Activated CD8-positive, alpha-beta T cell treated with anti-CD3 and anti-CD28 coated beads for 36 hours (primary cell): ENCODE measurements at regions of chr13 and their contacts with region 1.

Region 1: DNA sequence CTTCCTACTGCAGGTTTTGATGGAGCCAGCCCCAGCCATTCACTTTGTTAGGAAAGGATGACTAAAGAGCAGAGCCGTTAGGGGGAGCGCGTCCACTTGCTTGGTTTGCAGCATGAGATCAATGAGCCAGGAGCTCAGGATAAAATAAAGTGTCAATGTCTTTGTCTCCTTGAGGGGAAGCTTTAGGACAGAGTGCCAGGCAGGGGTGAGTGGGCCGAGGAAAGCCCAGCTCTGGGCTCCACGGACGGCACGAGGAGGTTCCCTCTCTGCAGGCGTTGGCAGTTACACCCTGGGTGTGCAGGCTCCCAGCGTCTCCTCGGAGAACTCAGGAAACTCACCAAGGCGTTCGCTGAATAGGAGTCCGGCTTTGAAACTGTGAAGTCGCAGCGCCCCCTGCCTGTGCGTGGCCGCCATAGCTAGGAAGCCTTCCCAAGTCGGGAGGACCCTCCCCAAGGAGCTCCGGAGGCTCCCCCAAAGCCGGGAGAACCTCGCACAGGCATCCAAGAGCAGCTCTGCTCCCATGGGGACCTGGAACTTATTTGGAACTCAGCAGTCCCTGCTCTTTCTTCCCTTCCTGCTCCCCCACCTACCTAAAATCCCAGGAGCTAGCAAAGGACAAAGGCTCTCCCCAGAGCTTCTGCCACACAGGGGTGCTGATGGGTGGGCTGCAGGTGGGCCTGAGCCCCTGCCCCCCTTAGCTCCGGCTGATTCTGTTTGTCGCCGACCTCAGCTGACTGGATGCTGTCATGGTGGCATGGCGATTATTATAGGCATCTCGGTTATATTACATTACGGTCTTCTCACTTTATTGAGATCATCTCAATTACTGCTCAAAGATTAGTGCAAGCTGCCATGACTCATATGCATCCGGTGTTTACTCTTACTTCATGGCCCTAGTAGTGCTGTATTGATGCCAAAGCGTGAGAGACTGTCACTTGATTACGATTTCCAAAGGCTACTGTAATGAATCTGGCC is 34.4 kb downstream of the GSX1 start:
- DNase-seq: peak; percentile 77
- ATAC-seq: peak; percentile 65
- H3K4me3 Mint-ChIP-seq: no peak overlapping the region
- H3K27ac Mint-ChIP-seq: no peak overlapping the region
- H3K4me1 Mint-ChIP-seq: peaks cover 8% of the 10 kb centered on the region
- H3K27me3 Mint-ChIP-seq: peaks cover 69% of the 10 kb centered on the region
- CTCF ChIP-seq: peak; percentile 97

Region 2: GRCh38 chr13:27362064-27362883 is 464.4 kb before region 1 on chr13:
- CTCF ChIA-PET with region 1: interaction called, 114 read pairs
- POLR2A ChIA-PET with region 1: no interaction called
- intact Hi-C with region 1: loop called (anchors 5 kb)
- DNase-seq: peak; percentile 90
- ATAC-seq: peak; percentile 98
- H3K4me3 Mint-ChIP-seq: peak overlapping the region; percentile 48
- H3K27ac Mint-ChIP-seq: no peak overlapping the region
- H3K4me1 Mint-ChIP-seq: peaks cover 4% of the 10 kb centered on the region
- H3K27me3 Mint-ChIP-seq: peaks cover 7% of the 10 kb centered on the region
- CTCF ChIP-seq: peak; percentile 87

Region 3: GRCh38 chr13:27533155-27533643 is 293.5 kb before region 1 on chr13:
- CTCF ChIA-PET with region 1: interaction called, 37 read pairs
- POLR2A ChIA-PET with region 1: no interaction called
- intact Hi-C with region 1: loop called (anchors 2 kb)
- DNase-seq: peak; percentile 66
- ATAC-seq: peak; percentile 82
- H3K4me3 Mint-ChIP-seq: no peak overlapping the region
- H3K27ac Mint-ChIP-seq: no peak overlapping the region
- H3K4me1 Mint-ChIP-seq: peaks cover 7% of the 10 kb centered on the region
- H3K27me3 Mint-ChIP-seq: peaks cover 2% of the 10 kb centered on the region
- CTCF ChIP-seq: peak; percentile 90

Region 4: GRCh38 chr13:27806744-27807387 is 19.8 kb before region 1 on chr13:
- CTCF ChIA-PET with region 1: interaction called, 16 read pairs
- POLR2A ChIA-PET with region 1: interaction called, 3 read pairs
- intact Hi-C with region 1: no loop called
- DNase-seq: no peak
- ATAC-seq: no peak
- H3K4me3 Mint-ChIP-seq: no peak overlapping the region
- H3K27ac Mint-ChIP-seq: no peak overlapping the region
- H3K4me1 Mint-ChIP-seq: no peaks in the 10 kb centered on the region
- H3K27me3 Mint-ChIP-seq: peaks cover 35% of the 10 kb centered on the region
- CTCF ChIP-seq: no peak

Region 5: GRCh38 chr13:27889471-27889870 is 62.8 kb after region 1 on chr13:
- CTCF ChIA-PET with region 1: no interaction called
- POLR2A ChIA-PET with region 1: no interaction called
- intact Hi-C with region 1: no loop called
- DNase-seq: no peak
- ATAC-seq: no peak
- H3K4me3 Mint-ChIP-seq: no peak overlapping the region
- H3K27ac Mint-ChIP-seq: no peak overlapping the region
- H3K4me1 Mint-ChIP-seq: no peaks in the 10 kb centered on the region
- H3K27me3 Mint-ChIP-seq: peaks cover 19% of the 10 kb centered on the region
- CTCF ChIP-seq: no peak

Region 6: DNA sequence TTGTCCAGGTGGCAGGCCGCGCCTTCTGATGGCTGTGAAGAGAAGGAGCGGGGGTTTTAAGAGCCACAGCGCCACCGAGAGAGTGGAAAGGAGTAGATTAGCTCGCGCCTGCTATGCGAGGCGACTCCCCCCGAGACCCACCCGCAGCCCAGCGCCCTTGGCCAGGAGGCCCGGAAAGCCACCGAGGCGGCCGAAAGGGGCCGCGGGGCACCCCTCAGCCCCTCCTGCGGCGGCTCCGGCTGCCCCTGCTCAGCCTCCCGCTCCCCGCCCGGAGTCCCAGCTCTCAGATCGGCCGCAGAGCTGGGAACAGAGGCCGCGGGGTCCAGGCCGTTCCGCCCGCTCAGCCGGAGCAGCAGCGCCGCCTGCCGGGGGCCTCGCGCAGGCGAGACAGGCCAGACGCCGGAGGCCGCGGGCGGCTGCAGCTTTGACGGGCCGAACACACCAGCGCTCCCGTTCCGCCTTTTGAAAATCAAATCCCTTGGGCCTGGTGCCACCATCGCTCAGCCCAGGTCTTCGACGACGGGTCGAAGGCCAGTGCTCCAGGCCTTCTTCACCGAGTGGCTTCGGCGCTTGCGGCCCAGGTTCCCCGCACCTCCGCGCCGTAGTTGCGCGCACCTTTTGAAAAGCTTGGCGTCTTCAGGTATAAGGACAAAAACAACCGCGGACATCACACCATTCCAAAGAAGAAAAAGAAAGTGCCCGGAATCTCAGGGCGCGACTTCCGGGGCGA is 127.2 kb after region 1 on chr13:
- CTCF ChIA-PET with region 1: interaction called, 200 read pairs
- POLR2A ChIA-PET with region 1: interaction called, 4 read pairs
- intact Hi-C with region 1: loop called (anchors 5 kb)
- DNase-seq: peak; percentile 71
- ATAC-seq: peak; percentile 92
- H3K4me3 Mint-ChIP-seq: peak overlapping the region; percentile 69
- H3K27ac Mint-ChIP-seq: no peak overlapping the region
- H3K4me1 Mint-ChIP-seq: peaks cover 14% of the 10 kb centered on the region
- H3K27me3 Mint-ChIP-seq: peaks cover 64% of the 10 kb centered on the region
- CTCF ChIP-seq: peak; percentile 90

Region 7: DNA sequence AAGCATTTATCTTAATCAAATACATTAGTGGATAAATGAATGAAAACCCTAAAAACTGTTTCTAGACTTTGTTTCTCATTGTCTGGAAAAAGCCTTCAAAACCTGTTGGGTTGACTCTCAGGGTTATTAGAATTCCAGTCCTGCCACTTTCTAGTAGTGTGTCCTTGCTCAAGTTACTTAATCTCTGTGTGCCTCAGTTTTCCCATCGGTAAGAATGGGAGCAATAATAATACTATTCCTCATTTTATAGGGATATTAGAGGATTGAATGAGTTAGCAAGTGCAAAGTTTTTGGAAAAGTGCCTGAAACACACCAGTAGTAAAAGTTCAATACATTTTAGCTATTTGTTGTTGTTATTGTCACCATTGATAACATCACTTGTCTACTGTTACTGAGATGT is 158.9 kb after region 1 on chr13:
- CTCF ChIA-PET with region 1: interaction called, 187 read pairs
- POLR2A ChIA-PET with region 1: interaction called, 5 read pairs
- intact Hi-C with region 1: loop called (anchors 1 kb)
- DNase-seq: no peak
- ATAC-seq: no peak
- H3K4me3 Mint-ChIP-seq: no peak overlapping the region
- H3K27ac Mint-ChIP-seq: no peak overlapping the region
- H3K4me1 Mint-ChIP-seq: no peaks in the 10 kb centered on the region
- H3K27me3 Mint-ChIP-seq: peaks cover 31% of the 10 kb centered on the region
- CTCF ChIP-seq: no peak